ENCODE measurements at regions of chr17 and their contacts with region 1.

Region 1: DNA sequence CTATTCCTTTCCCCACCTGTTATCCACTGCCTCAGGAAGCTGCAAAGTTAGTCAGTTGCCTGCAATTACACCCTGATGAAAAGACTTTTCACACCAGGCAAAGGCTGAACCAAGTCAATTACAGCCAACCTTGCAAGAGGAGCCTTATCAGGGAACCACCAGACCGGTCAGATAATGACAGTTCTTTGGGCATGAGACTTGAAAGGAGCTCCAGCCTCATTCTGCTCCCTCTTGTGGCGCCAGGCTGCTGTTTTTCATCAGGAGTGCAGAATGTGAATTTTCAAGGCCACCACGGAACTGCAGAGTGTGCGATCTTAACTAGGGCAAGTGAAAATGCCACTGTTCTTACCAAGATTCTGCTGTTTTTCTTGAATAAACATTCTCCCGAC is 22.5 kb downstream of the DNAI2 start:
- DNase-seq: peak; percentile 57
- ATAC-seq: peak; percentile 80
- H3K4me3 ChIP-seq: no peak overlapping the region
- H3K27ac ChIP-seq: no peak overlapping the region
- H3K4me1 ChIP-seq: peaks cover 0 to 16% of the 10 kb centered on the region in 2 experiments; a peak in 3 of 4 replicates
- H3K27me3 ChIP-seq: no peaks in the 10 kb centered on the region
- CTCF ChIP-seq: peak; percentile 75 to 82 (median 76); a peak in 5 of 6 replicates
- POLR2A ChIP-seq: no peak
- RAD21 ChIP-seq: peak; percentile 54

Region 2: GRCh38 chr17:74280093-74280513 is 16.4 kb before region 1 on chr17:
- CTCF ChIA-PET with region 1: interaction called, 48 read pairs
- POLR2A ChIA-PET with region 1: interaction called, 4 read pairs
- RAD21 ChIA-PET with region 1: interaction called in 1 of 2 experiments, 5 read pairs
- intact Hi-C with region 1: no loop called
- DNase-seq: no peak
- ATAC-seq: no peak
- H3K4me3 ChIP-seq: no peak overlapping the region
- H3K27ac ChIP-seq: no peak overlapping the region
- H3K4me1 ChIP-seq: peaks cover 5 to 10% of the 10 kb centered on the region in 2 experiments; a peak in 3 of 4 replicates
- H3K27me3 ChIP-seq: 0 out of 2 replicates have a peak, but pooled peaks cover 3% of the 10 kb centered on the region
- CTCF ChIP-seq: no peak
- POLR2A ChIP-seq: no peak
- RAD21 ChIP-seq: no peak

Region 3: GRCh38 chr17:74361230-74362068 is 64.9 kb after region 1 on chr17 and contains the start of gene BTBD17:
- CTCF ChIA-PET with region 1: interaction called, 27 read pairs
- POLR2A ChIA-PET with region 1: interaction called, 3 read pairs
- RAD21 ChIA-PET with region 1: no interaction called
- intact Hi-C with region 1: loop called (anchors 1 kb)
- DNase-seq: no peak
- ATAC-seq: peak; percentile 96
- H3K4me3 ChIP-seq: no peak within 1 kb of the TSS
- H3K27ac ChIP-seq: no peak within 1 kb of the TSS; the same call in 1 of the 2 replicates
- H3K4me1 ChIP-seq: peaks cover 0 to 8% of the 10 kb centered on the region in 2 experiments; a peak in 1 of 4 replicates
- H3K27me3 ChIP-seq: no peaks in the 10 kb centered on the region
- CTCF ChIP-seq: peak; percentile 86 to 98 (median 98)
- POLR2A ChIP-seq: no peak
- RAD21 ChIP-seq: peak; percentile 80
- total RNA-seq, gene BTBD17: not detected

Region 4: GRCh38 chr17:74457146-74457819 is 160.7 kb after region 1 on chr17:
- CTCF ChIA-PET with region 1: interaction called, 4 read pairs
- POLR2A ChIA-PET with region 1: no interaction called
- RAD21 ChIA-PET with region 1: interaction called in 1 of 2 experiments, 3 read pairs
- intact Hi-C with region 1: loop called (anchors 1 kb)
- DNase-seq: peak; percentile 63
- ATAC-seq: peak; percentile 56
- H3K4me3 ChIP-seq: no peak overlapping the region
- H3K27ac ChIP-seq: no peak overlapping the region
- H3K4me1 ChIP-seq: peaks cover 22 to 29% of the 10 kb centered on the region in 2 experiments
- H3K27me3 ChIP-seq: no peaks in the 10 kb centered on the region
- CTCF ChIP-seq: peak; percentile 97 to 100 (median 99)
- POLR2A ChIP-seq: no peak
- RAD21 ChIP-seq: peak; percentile 100

Region 5: DNA sequence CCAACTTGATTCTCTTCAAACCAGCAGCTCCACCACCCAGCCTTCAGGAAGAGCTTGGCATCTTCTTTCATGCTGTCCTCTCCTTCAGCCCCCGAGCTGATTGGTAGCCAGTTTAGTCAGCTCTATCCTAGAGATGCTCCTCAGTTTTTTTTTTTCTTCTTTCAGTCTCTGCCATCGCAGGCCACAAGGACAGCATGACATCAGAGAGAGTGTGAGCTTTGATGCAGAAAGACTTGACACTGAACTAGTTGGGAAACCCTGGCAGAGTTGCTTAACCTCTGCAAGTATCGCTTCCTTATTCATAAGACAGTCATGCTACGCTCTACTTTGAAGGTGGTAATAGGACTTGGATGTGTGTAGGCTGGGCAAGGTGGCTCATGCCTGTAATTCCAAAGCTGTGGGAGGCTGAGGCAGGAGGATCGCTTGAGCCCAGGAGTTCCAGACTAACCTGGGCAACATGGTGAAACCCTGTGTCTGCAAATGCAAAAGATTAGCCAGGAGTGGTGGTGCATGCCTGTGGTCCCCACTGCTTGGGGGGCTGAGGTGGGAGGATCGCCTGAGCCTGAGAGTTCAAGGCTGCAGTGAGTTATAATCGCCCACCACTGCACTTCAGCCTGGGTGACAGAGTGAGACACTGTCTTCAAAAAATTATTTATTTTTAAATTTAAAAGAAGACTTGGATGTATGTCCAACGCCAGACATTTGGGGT is 232.1 kb after region 1 on chr17:
- CTCF ChIA-PET with region 1: interaction called, 6 read pairs
- POLR2A ChIA-PET with region 1: no interaction called
- RAD21 ChIA-PET with region 1: no interaction called
- intact Hi-C with region 1: loop called (anchors 1 kb)
- DNase-seq: no peak
- ATAC-seq: no peak
- H3K4me3 ChIP-seq: no peak overlapping the region
- H3K27ac ChIP-seq: no peak overlapping the region
- H3K4me1 ChIP-seq: no peaks in the 10 kb centered on the region
- H3K27me3 ChIP-seq: peaks cover 60% of the 10 kb centered on the region
- CTCF ChIP-seq: no peak
- POLR2A ChIP-seq: no peak
- RAD21 ChIP-seq: no peak